Posterior vena cava (tissue), 2 donors: ENCODE measurements at regions of chr16 and their contacts with region 1.

Region 1: DNA sequence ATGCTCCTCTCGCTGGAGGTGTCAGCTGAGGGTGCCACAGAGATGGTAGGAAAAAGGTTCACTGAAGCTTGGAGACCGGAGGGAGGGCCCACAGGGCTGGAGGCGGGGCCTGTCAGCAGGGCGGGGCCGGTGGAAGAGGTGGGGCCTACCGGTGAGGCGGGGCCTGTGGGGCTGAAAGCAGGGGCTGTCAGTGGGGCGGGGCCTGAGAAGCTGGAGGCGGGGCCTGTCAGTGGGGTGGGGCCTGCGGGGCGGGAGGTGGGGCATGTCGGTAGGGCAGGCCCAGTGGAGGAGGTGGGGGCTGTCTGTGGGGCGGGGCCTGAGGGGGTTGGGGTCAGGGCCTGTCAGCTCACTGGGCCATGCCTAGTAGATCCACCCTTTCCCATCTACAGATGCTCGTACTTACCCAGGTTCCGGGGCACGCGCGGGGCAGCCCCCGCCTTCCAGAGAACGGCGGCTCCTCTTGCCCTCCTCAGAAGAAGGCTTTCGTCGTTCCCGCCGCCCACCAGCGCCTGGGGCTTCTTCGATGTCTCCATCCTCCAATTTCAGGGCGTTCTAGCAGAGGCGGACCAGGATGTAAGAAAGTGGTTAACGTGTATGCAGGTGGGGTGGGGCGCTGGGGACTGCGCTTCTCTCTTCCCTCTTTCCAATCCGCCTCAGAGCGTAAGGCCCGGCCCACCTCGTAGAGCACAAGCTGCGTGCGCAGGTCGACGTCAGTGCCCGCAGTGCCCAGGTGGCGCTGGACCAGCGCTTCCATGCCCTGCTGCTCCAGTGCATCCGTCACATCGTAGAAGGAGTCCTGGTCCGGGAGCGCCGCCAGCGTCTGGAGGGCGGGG is 9.8 kb downstream of the TMEM208 start:
- DNase-seq: peak; percentile 89

Region 2: GRCh38 chr16:67257486-67258160 is 20.8 kb after region 1 on chr16:
- intact Hi-C with region 1: loop called in 1 of 2 experiments (anchors 1 kb)
- DNase-seq: peak; percentile 46